HepG2 (cell line): ENCODE measurements at regions of chr10 and their contacts with region 1.

Region 1: GRCh38 chr10:107409522-107409921 is 245.0 kb upstream of the SORCS1 start:
- DNase-seq: no peak
- ATAC-seq: no peak
- H3K4me3 ChIP-seq: no peak overlapping the region
- H3K27ac ChIP-seq: no peak overlapping the region
- H3K4me1 ChIP-seq: no peaks in the 10 kb centered on the region
- H3K27me3 ChIP-seq: no peaks in the 10 kb centered on the region
- CTCF ChIP-seq: no peak
- EP300 ChIP-seq: no peak
- POLR2A ChIP-seq: no peak
- RAD21 ChIP-seq: no peak

Region 2: GRCh38 chr10:107317594-107317993 is 91.9 kb before region 1 on chr10:
- CTCF ChIA-PET with region 1: no interaction called
- POLR2A ChIA-PET with region 1: no interaction called
- in situ Hi-C with region 1: no loop called
- intact Hi-C with region 1: no loop called
- DNase-seq: no peak
- ATAC-seq: no peak
- H3K4me3 ChIP-seq: no peak overlapping the region
- H3K27ac ChIP-seq: no peak overlapping the region
- H3K4me1 ChIP-seq: no peaks in the 10 kb centered on the region
- H3K27me3 ChIP-seq: no peaks in the 10 kb centered on the region
- CTCF ChIP-seq: no peak
- EP300 ChIP-seq: no peak
- POLR2A ChIP-seq: no peak
- RAD21 ChIP-seq: no peak

Region 3: GRCh38 chr10:108434559-108435252 is 1025.2 kb after region 1 on chr10:
- CTCF ChIA-PET with region 1: no interaction called
- POLR2A ChIA-PET with region 1: no interaction called
- in situ Hi-C with region 1: no loop called
- intact Hi-C with region 1: loop called (anchors 5 kb)
- DNase-seq: no peak
- ATAC-seq: no peak
- H3K4me3 ChIP-seq: no peak overlapping the region
- H3K27ac ChIP-seq: no peak overlapping the region
- H3K4me1 ChIP-seq: no peaks in the 10 kb centered on the region
- H3K27me3 ChIP-seq: no peaks in the 10 kb centered on the region; a peak in 1 of 5 replicates
- CTCF ChIP-seq: no peak
- EP300 ChIP-seq: no peak
- POLR2A ChIP-seq: no peak
- RAD21 ChIP-seq: no peak